ENCODE measurements at regions of chr4 and their contacts with region 1.

Region 1: DNA sequence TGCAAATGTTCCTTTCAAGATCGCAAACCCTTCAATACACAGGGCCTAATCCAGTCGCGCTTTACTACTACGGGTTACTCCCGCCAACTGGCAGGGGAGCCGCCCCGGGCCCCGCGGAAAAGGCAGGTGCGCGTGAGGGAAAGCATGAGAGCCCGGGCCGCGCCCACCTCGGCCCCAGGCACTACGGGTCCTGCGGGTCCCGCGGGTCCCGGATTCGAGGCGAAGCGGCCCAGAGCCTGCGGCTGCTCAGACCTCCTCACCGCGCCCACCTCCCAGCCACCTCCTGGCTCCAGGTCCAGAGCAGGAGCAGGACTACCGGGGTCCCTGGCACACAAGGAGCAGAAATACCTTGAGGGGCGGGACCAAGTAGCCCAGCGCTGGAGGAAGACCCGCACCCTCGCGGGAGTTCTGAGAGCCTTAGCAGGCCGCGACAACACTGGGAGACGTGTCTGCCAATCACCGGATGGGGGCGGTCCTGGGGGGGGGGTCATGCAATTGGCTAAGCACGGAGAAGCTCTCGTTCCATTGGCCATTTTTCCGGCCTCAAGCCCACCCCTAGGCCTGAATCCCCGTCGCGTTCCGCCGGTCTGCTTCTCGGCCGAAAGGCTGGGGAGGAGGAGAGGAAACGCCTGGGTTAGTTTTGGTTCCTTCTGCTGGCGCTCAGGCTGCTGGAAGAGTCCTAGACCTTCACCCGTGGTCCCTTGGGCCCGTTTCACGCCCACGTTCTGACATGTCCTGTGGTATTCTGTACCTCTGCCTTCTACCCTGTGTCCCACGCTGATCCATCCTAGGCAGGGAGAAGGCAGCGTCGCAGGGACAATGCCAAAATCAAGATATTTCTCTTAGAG is 29.0 kb downstream of the ERVMER34-1 start:
- DNase-seq: peak; percentile 95 to 97 (median 95)
- ATAC-seq: peak; percentile 98 to 99 (median 98)
- H3K4me3 ChIP-seq: peak overlapping the region; percentile 62 to 96 (median 78)
- H3K27ac ChIP-seq: peak overlapping the region; percentile 80 to 97 (median 92)
- H3K4me1 ChIP-seq: peaks cover 0 to 16% (median 2%) of the 10 kb centered on the region in 12 donors
- H3K27me3 ChIP-seq: no peaks in the 10 kb centered on the region
- CTCF ChIP-seq: peak in 3 of 12 donors; percentile 9 to 32 (median 13)
- POLR2A ChIP-seq: peak in 1 of 2 donors; percentile 80

Region 2: DNA sequence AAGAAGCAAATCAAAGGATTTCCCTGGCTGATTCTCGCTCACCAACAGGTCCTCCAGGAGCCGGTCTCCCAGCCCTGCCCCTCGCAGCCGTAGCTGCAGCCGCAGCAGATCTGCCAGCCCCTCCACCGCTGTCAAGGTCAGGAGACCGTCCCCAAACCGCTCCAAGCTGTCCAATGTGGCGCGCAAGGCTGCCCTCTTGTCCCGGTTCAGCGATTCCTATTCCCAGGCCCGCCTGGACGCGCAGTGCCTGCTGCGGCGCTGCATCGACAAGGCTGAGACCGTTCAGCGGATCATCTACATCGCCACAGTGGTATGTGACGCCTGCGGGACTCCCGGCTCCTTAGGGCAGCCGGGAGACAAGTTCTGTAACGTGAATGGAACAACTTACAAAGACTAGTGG is 645.5 kb before region 1 on chr4:
- intact Hi-C with region 1: no loop called
- DNase-seq: peak in 3 of 5 donors; percentile 20 to 70 (median 29)
- ATAC-seq: peak in 3 of 4 donors; percentile 57 to 80 (median 65)
- H3K4me3 ChIP-seq: peak overlapping the region in 8 of 12 donors; percentile 7 to 30 (median 13)
- H3K27ac ChIP-seq: no peak overlapping the region
- H3K4me1 ChIP-seq: peaks cover 0 to 6% (median 0%) of the 10 kb centered on the region in 12 donors
- H3K27me3 ChIP-seq: peaks cover 0 to 13% (median 0%) of the 10 kb centered on the region in 9 donors
- CTCF ChIP-seq: peak in 1 of 12 donors; percentile 6
- POLR2A ChIP-seq: no peak

Region 3: DNA sequence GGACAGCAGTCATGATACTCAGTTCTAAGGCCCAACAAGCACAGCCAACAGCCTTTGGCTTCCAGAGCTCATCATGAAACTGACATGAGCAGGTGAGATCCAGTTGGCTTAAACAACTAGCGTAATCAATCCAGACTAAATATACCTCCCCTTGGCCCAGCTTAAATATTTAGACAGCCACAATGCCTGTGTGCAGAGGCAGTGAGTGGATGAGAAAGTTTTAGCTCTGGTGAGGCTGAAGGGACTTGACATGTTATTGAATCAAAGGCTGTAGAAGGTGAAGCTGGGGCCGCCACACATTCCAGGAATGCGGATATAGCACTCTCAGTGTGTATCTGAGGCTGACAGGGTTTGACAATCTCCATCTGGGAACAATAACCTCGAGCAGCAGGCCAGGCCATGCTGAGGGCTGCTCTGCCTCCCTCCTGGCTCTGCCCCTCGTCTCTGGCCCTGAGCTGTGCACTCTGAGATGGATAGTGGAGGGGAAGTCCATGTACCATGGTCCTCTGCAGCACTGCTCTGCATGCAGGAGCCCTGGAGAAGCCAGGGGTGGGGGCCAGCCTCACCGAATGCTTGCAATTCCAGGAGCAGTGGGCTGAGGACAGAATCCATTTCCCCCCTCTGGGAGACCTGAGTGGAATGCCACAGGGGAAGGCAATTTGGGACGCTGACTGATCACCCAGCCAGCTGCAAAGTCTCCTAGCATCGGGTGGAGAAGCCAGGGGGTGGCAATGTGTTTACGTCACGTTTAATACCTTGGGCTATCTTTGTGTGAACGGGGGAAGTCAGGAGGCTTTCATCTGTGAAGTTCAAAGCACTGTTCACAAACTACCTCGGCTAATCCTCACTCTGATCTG is 102.6 kb after region 1 on chr4:
- intact Hi-C with region 1: no loop called
- DNase-seq: peak in 4 of 5 donors; percentile 44 to 74 (median 49)
- ATAC-seq: peak; percentile 90 to 96 (median 94)
- H3K4me3 ChIP-seq: no peak overlapping the region
- H3K27ac ChIP-seq: peak overlapping the region in 10 of 12 donors; percentile 12 to 90 (median 66)
- H3K4me1 ChIP-seq: peaks cover 0 to 22% (median 11%) of the 10 kb centered on the region in 12 donors
- H3K27me3 ChIP-seq: no peaks in the 10 kb centered on the region
- CTCF ChIP-seq: no peak
- POLR2A ChIP-seq: no peak

Region 4: GRCh38 chr4:52837726-52838558 is 115.8 kb after region 1 on chr4:
- intact Hi-C with region 1: loop called in 1 of 10 experiments (anchors 1 kb)
- DNase-seq: peak in 1 of 5 donors; percentile 22
- ATAC-seq: peak in 3 of 4 donors; percentile 40 to 74 (median 51)
- H3K4me3 ChIP-seq: no peak overlapping the region
- H3K27ac ChIP-seq: peak overlapping the region in 5 of 12 donors; percentile 9 to 70 (median 44)
- H3K4me1 ChIP-seq: peaks cover 0 to 61% (median 45%) of the 10 kb centered on the region in 12 donors
- H3K27me3 ChIP-seq: no peaks in the 10 kb centered on the region
- CTCF ChIP-seq: no peak
- POLR2A ChIP-seq: no peak

Region 5: DNA sequence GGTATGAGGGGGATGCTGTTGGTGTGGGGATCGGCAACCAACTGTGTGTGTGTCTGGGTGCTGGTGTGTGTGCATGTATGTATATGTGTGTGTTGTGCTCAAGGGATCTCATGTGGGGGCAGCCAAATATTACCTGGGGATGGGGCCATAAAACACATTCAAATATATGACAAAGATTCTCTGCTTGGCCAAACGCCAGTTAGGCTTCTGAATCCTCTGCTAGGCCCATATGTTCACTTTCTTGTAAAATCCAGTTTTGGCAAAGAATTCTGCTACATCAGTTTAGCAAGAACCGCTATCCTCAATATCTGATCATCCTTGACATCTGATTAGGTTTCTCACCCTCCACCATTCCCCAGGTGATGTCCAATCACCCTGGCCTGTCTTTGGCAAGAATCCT is 246.5 kb after region 1 on chr4:
- intact Hi-C with region 1: loop called in 1 of 10 experiments (anchors 10 kb)
- DNase-seq: no peak
- ATAC-seq: no peak
- H3K4me3 ChIP-seq: no peak overlapping the region
- H3K27ac ChIP-seq: no peak overlapping the region
- H3K4me1 ChIP-seq: peaks cover 0 to 7% (median 0%) of the 10 kb centered on the region in 12 donors
- H3K27me3 ChIP-seq: no peaks in the 10 kb centered on the region
- CTCF ChIP-seq: no peak
- POLR2A ChIP-seq: no peak

Measured in heart left ventricle (tissue), 16 donors.